Dorsolateral prefrontal cortex (tissue), 120 donors: ENCODE measurements at regions of chr12 and their contacts with region 1.

Region 1: DNA sequence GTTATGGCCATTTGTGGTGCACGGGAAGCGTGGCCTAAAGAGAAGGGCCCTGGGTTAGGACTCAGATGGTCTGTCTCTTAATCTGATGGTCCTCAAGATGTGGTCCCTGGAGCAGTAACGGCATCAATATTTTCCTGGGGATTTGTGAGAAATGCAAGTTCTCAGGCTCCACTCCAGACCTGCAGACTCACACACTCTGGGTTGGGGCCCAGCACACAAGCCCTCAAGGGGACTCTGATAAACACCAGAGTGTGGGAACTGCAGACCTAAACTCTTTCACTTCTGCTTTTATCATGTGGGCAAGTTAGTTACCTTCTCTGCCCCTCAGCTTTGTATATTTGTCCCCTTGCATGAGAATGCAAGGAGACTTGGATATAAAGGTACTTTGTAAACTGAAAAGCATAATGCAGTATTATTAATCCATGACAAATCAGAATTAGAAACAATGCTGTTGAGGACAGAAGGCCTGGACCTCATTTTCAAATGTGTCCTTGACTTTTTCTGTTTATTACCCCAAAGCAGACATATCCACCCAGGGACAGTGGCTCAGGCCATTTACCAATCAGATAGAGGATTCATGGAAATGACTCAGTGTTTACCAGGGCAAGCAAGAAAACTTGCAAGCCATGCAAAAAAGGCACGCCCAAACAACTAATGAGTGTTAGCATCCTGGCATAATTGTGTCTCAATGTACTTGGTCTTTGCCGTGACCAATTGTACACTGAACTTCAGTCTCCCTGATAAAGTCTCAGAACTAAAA is 157.0 kb downstream of the ASCL1 start:
- DNase-seq: no peak
- H3K4me3 ChIP-seq: no peak overlapping the region
- H3K27ac ChIP-seq: no peak overlapping the region
- H3K27me3 ChIP-seq: no peaks in the 10 kb centered on the region
- CTCF ChIP-seq: no peak

Region 2: DNA sequence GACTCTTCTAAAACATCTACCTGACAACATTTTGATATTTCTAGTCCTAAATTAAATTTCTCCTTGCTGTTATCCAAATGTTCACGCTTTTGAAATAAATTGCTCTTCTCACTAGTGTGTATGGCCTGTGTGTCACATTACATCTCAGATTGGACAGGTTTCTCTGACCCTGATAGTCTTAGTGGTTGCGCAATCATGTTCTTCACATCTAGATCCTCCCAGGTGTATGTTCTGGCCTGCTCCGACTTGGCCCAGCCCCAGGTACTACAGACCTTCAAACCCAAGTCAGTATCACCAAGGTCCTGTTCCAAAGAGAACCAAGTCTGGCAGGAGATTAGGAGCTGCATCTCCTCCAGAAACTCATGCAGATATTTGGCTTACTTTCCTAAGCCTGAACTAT is 52.5 kb after region 1 on chr12:
- intact Hi-C with region 1: loop called in 1 of 2 experiments (anchors 10 kb)
- DNase-seq: no peak
- H3K4me3 ChIP-seq: no peak overlapping the region
- H3K27ac ChIP-seq: no peak overlapping the region
- H3K27me3 ChIP-seq: no peaks in the 10 kb centered on the region
- CTCF ChIP-seq: no peak